A673 (cell line): ENCODE measurements at regions of chr17 and their contacts with region 1.

Region 1: DNA sequence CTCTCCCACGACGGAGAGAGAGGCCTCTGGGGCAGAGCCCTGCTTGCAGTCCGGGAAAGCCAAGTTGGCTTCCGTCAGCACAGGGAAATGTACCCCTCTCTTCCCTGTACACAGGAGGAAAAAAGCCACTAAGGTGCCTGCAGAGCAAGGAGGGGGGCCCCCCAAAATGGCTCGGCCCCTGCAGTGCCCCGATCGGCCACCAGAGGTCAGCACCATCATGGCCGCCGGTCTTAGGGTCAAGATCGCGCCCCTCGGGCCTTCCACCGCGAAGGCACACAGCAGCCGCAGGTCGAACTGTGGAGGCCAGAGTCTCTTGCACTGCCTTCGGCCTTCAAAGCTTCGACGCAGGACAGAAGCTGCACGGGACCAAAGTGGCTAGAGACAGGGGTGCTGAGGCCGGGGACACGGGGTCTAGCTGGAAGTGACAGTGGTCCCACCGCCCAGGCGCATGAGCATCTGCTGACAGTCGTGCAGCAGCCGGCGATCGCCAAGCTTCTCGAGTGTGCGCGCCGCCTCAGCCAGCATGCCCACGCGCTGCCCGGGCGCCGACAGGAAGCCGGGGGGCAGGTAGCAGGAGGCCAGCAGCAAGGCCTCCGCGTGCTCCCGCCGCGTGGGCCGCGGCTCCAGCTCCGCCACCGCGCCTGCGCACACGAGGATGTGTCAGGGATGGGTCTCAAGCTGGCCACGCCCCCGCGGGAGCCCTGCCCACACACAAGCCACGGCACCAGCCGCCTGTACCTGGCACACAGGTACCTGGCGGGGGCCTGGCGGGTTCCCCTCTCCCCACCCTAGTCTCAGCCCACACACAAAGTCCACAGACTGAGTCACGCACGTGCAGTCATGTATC is 24.4 kb downstream of the SREBF1 start:
- DNase-seq: peak; percentile 76
- H3K4me3 ChIP-seq: no peak overlapping the region
- H3K27ac ChIP-seq: peak overlapping the region; percentile 38
- H3K4me1 ChIP-seq: peaks cover 37% of the 10 kb centered on the region
- H3K27me3 ChIP-seq: no peaks in the 10 kb centered on the region
- CTCF ChIP-seq: peak; percentile 96

Region 2: DNA sequence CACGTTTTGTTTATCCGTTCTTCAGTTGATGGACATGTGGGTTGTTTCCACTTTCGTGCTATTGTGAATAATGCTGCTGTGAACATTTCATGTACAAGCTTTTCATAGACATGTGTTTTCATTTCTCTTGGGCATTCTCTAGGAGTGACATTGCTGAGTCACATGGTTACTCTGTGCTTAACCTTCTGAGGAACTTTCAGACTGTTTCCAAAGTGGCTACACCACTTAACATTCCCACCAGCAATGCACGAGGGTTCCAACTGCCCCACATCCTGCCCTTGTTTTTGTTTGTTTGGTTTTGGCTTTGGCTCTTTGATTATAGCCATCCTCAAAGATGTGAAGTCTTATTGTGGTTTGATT is 206.7 kb before region 1 on chr17:
- CTCF ChIA-PET with region 1: no interaction called
- POLR2A ChIA-PET with region 1: no interaction called
- intact Hi-C with region 1: no loop called
- DNase-seq: no peak
- H3K4me3 ChIP-seq: no peak overlapping the region
- H3K27ac ChIP-seq: no peak overlapping the region
- H3K4me1 ChIP-seq: no peaks in the 10 kb centered on the region
- H3K27me3 ChIP-seq: no peaks in the 10 kb centered on the region
- CTCF ChIP-seq: no peak

Region 3: GRCh38 chr17:17859909-17860765 is 47.7 kb after region 1 on chr17:
- CTCF ChIA-PET with region 1: interaction called, 5 read pairs
- POLR2A ChIA-PET with region 1: no interaction called
- intact Hi-C with region 1: loop called (anchors 1 kb)
- DNase-seq: peak; percentile 73
- H3K4me3 ChIP-seq: no peak overlapping the region
- H3K27ac ChIP-seq: no peak overlapping the region
- H3K4me1 ChIP-seq: peaks cover 10% of the 10 kb centered on the region
- H3K27me3 ChIP-seq: no peaks in the 10 kb centered on the region
- CTCF ChIP-seq: peak; percentile 98

Region 4: GRCh38 chr17:17919169-17920107 is 107.0 kb after region 1 on chr17:
- CTCF ChIA-PET with region 1: interaction called, 8 read pairs
- POLR2A ChIA-PET with region 1: no interaction called
- intact Hi-C with region 1: loop called (anchors 2 kb)
- DNase-seq: peak; percentile 91
- H3K4me3 ChIP-seq: no peak overlapping the region
- H3K27ac ChIP-seq: peak overlapping the region; percentile 14
- H3K4me1 ChIP-seq: peaks cover 33% of the 10 kb centered on the region
- H3K27me3 ChIP-seq: no peaks in the 10 kb centered on the region
- CTCF ChIP-seq: peak; percentile 95

Region 5: GRCh38 chr17:17983376-17983775 is 170.9 kb after region 1 on chr17:
- CTCF ChIA-PET with region 1: no interaction called
- POLR2A ChIA-PET with region 1: no interaction called
- intact Hi-C with region 1: no loop called
- DNase-seq: no peak
- H3K4me3 ChIP-seq: no peak overlapping the region
- H3K27ac ChIP-seq: no peak overlapping the region
- H3K4me1 ChIP-seq: no peaks in the 10 kb centered on the region
- H3K27me3 ChIP-seq: no peaks in the 10 kb centered on the region
- CTCF ChIP-seq: no peak

Region 6: DNA sequence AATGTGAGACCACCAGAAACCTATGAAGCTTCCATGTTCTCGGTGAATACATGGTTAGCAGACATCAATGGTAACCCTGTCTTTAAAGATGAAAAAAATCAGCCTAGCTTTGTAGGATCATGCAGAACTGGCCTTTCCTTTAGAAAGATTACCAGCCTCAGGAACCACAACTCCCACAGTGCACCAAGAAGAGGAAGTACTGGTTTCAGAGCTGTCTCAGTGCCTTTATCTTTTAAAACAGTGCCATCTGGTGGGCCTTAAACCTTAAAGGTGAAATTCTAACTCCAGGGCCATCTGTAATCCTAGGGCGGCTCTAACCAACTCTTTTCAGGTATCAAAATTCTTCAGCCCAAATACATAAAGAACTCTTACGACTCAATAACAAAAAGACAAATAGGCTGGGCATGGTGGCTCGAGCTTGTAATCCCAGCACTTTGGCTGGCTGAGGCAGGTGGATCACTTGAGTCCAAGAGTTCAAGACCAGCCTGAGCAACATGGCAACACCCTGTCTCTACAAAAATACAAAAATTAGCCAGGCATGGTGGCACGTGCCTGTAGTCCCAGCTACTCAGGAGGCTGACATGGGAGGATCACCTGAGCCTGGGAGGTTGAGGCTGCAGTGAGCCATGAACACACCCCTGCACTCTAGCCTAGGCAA is 221.1 kb after region 1 on chr17:
- CTCF ChIA-PET with region 1: no interaction called
- POLR2A ChIA-PET with region 1: no interaction called
- intact Hi-C with region 1: loop called (anchors 2 kb)
- DNase-seq: peak; percentile 91
- H3K4me3 ChIP-seq: no peak overlapping the region
- H3K27ac ChIP-seq: no peak overlapping the region
- H3K4me1 ChIP-seq: peaks cover 9% of the 10 kb centered on the region
- H3K27me3 ChIP-seq: no peaks in the 10 kb centered on the region
- CTCF ChIP-seq: peak; percentile 70